Activated naive CD8-positive, alpha-beta T cell treated with anti-CD3 and anti-CD28 coated beads, Interleukin-2, amount 10 ng/mL, durations not matched to agents 7 days and 5 days (primary cell): ENCODE measurements at regions of chr18 and their contacts with region 1.

Region 1: DNA sequence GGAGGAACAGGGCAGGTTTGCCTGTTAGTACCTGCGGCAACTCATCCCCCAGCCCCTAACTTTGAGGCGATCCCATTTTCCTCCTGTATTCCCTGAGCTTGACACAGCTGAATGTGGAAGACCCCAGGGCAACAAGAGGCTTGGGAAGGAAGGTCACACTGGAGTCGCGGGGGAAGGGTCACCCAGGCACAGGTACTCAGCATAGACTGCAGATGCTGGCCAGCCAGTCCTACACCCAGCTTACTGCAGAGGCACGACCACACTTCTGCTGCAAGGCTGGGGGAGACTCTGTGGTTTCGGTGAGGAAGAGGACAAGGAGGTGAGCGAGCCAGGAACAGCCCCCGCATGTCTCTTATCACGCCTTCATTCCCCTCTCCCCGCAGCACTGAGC is 91.5 kb downstream of the MALT1 start:
- DNase-seq: no peak
- ATAC-seq: no peak
- H3K4me3 Mint-ChIP-seq: no peak overlapping the region
- H3K27ac Mint-ChIP-seq: no peak overlapping the region
- H3K4me1 Mint-ChIP-seq: peaks cover 30% of the 10 kb centered on the region
- H3K27me3 Mint-ChIP-seq: peaks cover 40% of the 10 kb centered on the region

Region 2: DNA sequence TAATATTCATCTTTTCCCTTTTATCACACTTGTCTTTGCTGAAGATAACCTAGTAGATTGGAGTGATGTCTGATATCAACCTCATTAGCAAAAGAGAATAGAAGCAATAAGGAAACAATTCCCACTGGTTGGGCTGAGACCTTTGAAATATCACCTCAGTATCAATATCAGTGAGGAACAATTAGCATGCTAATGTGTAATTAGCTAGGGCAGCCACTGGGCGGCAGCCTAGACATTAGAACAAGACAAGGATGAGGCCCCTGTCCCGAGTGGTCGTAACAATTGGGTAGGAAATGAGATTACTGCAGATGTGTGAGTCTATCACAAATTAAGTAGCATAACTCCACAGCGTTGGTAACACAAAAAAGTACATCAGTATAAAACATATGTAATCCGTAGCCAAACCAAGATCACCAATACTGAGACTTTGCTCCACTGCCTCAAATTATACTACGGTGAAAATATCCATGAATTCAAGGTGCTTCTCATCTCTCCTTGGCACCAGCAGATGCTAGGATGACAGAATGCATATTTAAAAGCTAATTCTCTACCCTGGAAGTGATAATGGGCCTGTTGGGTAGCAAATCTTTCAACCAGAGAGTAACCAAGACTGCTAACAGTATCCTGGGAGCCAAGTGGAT is 232.9 kb before region 1 on chr18:
- POLR2A ChIA-PET with region 1: interaction called, 13 read pairs
- DNase-seq: peak; percentile 69
- ATAC-seq: peak; percentile 69
- H3K4me3 Mint-ChIP-seq: no peak overlapping the region
- H3K27ac Mint-ChIP-seq: no peak overlapping the region
- H3K4me1 Mint-ChIP-seq: peaks cover 13% of the 10 kb centered on the region
- H3K27me3 Mint-ChIP-seq: peaks cover 31% of the 10 kb centered on the region